ENCODE measurements at regions of chr2 and their contacts with region 1.

Region 1: GRCh38 chr2:74482801-74483674 is at the starts of genes CCDC142 and TTC31:
- DNase-seq: peak; percentile 97
- H3K4me3 ChIP-seq: peak within 1 kb of the TSS; percentile 6 to 79 (median 66)
- H3K27ac ChIP-seq: peak within 1 kb of the TSS; percentile 36
- H3K4me1 ChIP-seq: peaks cover 13% of the 10 kb centered on the region
- H3K27me3 ChIP-seq: no peaks in the 10 kb centered on the region
- CTCF ChIP-seq: peak; percentile 89 to 93
- POLR2A ChIP-seq: peak; percentile 55
- total RNA-seq, gene CCDC142: 20.3 and 23.8 TPM in 2 replicates
- total RNA-seq, gene TTC31: 20.1 and 21.8 TPM in 2 replicates

Region 2: DNA sequence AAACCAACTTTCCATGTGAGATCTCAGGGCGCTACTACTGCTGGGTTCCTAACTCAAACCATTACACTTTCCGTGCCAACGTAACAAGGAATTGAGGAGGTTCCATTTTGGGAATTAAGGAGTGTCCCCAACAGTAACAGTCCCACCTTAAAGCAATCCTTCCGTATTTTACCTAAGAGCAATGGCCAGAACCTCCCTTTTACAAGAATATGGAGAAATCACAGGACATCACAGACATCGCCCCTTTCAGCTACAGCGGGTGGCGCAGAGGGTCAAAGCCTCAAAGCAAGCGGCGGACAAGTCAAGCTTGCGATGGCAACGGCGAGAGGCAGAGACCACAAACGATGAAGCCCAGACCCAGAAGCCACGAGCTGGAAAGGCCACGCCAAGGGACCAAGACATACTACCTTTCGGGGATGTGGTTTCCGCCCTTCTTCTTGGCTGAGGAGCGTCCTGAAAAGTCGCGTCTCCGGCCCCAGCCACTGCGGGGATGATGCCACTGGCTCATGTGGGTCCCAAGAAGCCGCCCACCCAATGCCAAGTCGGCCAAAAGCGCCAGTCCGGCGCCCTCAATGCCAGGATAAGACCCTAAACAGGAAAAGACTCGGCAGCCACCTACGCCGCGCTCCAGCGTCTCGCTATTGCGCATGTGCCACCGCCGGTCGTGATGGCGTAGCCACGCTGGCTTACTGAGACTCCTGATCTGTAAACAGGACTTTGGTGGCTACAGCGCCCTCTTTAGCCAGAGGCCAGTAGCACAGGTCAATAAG is 703.4 kb before region 1 on chr2 and contains the start of gene DUSP11:
- CTCF ChIA-PET with region 1: no interaction called
- POLR2A ChIA-PET with region 1: interaction called, 19 read pairs
- dilution Hi-C with region 1: no loop called
- intact Hi-C with region 1: no loop called
- DNase-seq: peak; percentile 97
- H3K4me3 ChIP-seq: peak within 1 kb of the TSS; percentile 66 to 92 (median 68)
- H3K27ac ChIP-seq: peak within 1 kb of the TSS; percentile 36
- H3K4me1 ChIP-seq: peaks cover 9% of the 10 kb centered on the region
- H3K27me3 ChIP-seq: no peaks in the 10 kb centered on the region
- CTCF ChIP-seq: peak; percentile 92 to 95
- POLR2A ChIP-seq: peak; percentile 92
- total RNA-seq, gene DUSP11: 25.3 and 27.0 TPM in 2 replicates

Region 3: GRCh38 chr2:74472086-74472944 is 10.7 kb before region 1 on chr2 and contains the start of gene MRPL53:
- CTCF ChIA-PET with region 1: interaction called, 12 read pairs
- POLR2A ChIA-PET with region 1: interaction called, 3 read pairs
- dilution Hi-C with region 1: no loop called
- intact Hi-C with region 1: loop called (anchors 1 kb)
- DNase-seq: peak; percentile 93
- H3K4me3 ChIP-seq: peak within 1 kb of the TSS; percentile 43 to 84 (median 75)
- H3K27ac ChIP-seq: peak within 1 kb of the TSS; percentile 10
- H3K4me1 ChIP-seq: peaks cover 13% of the 10 kb centered on the region
- H3K27me3 ChIP-seq: no peaks in the 10 kb centered on the region
- CTCF ChIP-seq: no peak
- POLR2A ChIP-seq: peak; percentile 98
- total RNA-seq, gene MRPL53: 69.7 and 70.4 TPM in 2 replicates

Region 4: GRCh38 chr2:74498500-74499266 is 15.6 kb after region 1 on chr2:
- CTCF ChIA-PET with region 1: interaction called, 11 read pairs
- POLR2A ChIA-PET with region 1: no interaction called
- dilution Hi-C with region 1: no loop called
- intact Hi-C with region 1: loop called (anchors 1 kb)
- DNase-seq: peak; percentile 35
- H3K4me3 ChIP-seq: peak overlapping the region in 2 of 3 experiments; percentile 19 to 25
- H3K27ac ChIP-seq: no peak overlapping the region
- H3K4me1 ChIP-seq: peaks cover 30% of the 10 kb centered on the region
- H3K27me3 ChIP-seq: peaks cover 23 to 40% of the 10 kb centered on the region in 2 experiments
- CTCF ChIP-seq: no peak
- POLR2A ChIP-seq: no peak

Region 5: GRCh38 chr2:74553892-74554645 is 71.0 kb after region 1 on chr2 and contains the start of gene LOXL3:
- CTCF ChIA-PET with region 1: no interaction called
- POLR2A ChIA-PET with region 1: no interaction called
- dilution Hi-C with region 1: no loop called
- intact Hi-C with region 1: loop called (anchors 1 kb)
- DNase-seq: peak; percentile 69
- H3K4me3 ChIP-seq: peak within 1 kb of the TSS; percentile 77 to 84 (median 79)
- H3K27ac ChIP-seq: peak within 1 kb of the TSS; percentile 47
- H3K4me1 ChIP-seq: peaks cover 10% of the 10 kb centered on the region
- H3K27me3 ChIP-seq: no peaks in the 10 kb centered on the region
- CTCF ChIP-seq: no peak
- POLR2A ChIP-seq: no peak
- total RNA-seq, gene LOXL3: 0.95 and 0.97 TPM in 2 replicates